Head of caudate nucleus (tissue), 42 donors: ENCODE measurements at regions of chr12 and their contacts with region 1.

Region 1: GRCh38 chr12:120710031-120710804 is at the start of gene UNC119B:
- DNase-seq: peak in 41 of 42 donors; percentile 41 to 91 (median 82)

Region 2: DNA sequence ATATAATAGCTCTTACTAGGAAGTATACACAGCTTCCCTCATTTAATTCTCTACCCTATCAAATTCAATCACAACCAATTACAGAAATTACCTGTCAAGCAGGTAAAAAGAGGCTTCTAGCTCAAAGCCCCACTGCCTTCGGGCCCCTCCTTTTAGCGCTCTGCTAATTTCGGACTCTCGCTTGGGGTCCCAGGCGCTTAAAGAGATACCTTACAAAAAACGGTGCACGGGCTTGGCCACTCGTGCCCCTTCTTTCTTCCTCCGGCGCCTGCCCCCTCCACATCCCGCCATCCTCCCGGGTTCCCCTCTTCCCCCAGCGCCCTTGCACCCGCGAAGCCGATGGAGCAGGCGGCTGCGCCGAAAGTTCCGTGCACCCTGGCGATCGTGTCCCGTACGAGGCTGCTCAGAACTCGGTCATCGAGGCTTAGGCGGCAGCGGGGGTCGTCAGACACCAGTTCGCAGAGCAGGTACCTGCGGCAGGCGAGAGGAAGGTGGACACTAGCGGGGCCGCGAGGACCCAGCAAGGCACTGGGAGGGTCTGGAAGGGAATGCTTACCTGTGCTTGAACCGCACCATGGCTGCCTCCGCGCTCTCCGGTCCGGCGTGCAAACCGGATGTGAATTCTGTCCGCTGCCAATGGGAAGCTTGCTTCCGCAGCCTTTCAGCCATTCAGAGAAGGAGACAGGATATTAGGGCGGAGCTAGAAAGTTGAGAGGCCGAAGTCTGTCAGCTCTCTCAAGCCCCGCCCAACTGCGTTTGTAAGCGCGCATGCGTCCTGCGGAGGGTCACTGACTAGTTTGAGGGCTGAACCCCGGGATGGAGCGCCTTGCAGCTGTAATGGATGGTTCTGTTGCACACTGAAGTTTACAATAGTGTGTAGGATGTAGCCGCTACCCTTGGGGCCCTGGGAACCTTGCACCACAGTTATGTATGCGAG is 129.2 kb before region 1 on chr12 and contains the start of gene POP5:
- intact Hi-C with region 1: loop called (anchors 5 kb)
- DNase-seq: peak; percentile 95 to 99 (median 98)

Region 3: GRCh38 chr12:120649442-120650232 is 60.6 kb before region 1 on chr12:
- intact Hi-C with region 1: loop called (anchors 2 kb)
- DNase-seq: peak in 16 of 42 donors; percentile 16 to 60 (median 36)

Region 4: GRCh38 chr12:120686690-120687577 is 23.3 kb before region 1 on chr12 and contains the start of gene MLEC:
- intact Hi-C with region 1: loop called (anchors 2 kb)
- DNase-seq: peak; percentile 96 to 100 (median 99)